Stomach (tissue), 19 donors: ENCODE measurements at regions of chr17 and their contacts with region 1.

Region 1: DNA sequence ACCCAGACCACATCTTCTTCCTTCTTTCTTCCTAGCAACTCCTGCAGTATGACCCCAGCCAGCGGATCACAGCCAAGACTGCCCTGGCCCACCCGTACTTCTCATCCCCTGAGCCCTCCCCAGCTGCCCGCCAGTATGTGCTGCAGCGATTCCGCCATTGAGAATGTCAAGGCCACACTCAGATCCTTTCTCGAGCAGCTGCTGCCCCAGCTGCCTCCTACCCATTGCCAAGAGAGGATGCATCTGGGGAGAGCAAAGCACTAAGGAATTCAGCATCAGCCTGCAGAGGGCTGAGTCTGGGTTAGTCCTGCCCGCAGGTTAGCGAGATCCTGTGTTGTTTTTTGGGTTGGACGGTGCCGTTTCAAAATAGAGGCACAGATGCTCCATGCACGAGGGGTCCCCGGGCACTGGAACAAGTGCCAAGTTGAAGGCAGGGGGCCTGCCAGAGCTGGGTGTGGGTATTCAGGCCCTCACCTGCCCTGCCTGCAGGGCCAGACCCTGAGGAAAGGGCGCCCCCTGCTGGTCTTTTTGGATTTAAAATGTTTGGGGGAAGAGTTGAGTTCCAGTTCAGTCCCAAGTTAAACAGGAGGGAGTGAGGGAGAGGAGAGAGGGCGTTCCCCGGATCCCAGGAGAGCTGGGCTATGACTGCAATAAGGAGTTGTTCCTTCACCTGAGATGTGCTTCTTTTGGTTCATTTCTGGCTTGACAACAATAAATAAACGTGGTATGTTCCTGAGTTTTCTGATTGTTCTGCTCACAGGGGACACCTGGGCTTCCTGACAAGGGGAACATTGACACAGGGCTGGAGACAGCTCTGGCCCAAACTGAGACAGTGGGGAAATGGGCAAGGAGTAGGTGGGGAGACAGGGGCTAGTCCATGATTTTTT is 4.9 kb downstream of the CDK3 start:
- DNase-seq: peak; percentile 86
- H3K4me3 ChIP-seq: no peak overlapping the region
- H3K27ac ChIP-seq: peak overlapping the region in 3 of 5 donors; percentile 3 to 37 (median 4)
- H3K4me1 ChIP-seq: peaks cover 9 to 28% (median 12%) of the 10 kb centered on the region in 4 donors
- H3K27me3 ChIP-seq: no peaks in the 10 kb centered on the region
- CTCF ChIP-seq: peak in 5 of 7 experiments; percentile 33 to 78 (median 65)
- EP300 ChIP-seq: no peak
- POLR2A ChIP-seq: no peak

Region 2: GRCh38 chr17:75914643-75915267 is 90.8 kb before region 1 on chr17:
- intact Hi-C with region 1: loop called (anchors 5 kb)
- DNase-seq: no peak
- H3K4me3 ChIP-seq: no peak overlapping the region
- H3K27ac ChIP-seq: no peak overlapping the region
- H3K4me1 ChIP-seq: peaks cover 6 to 23% (median 17%) of the 10 kb centered on the region in 4 donors
- H3K27me3 ChIP-seq: no peaks in the 10 kb centered on the region
- CTCF ChIP-seq: no peak
- EP300 ChIP-seq: no peak
- POLR2A ChIP-seq: no peak